ENCODE measurements at regions of chr1 and their contacts with region 1.

Region 1: GRCh38 chr1:150629115-150629928 is at the start of gene ENSA:
- DNase-seq: peak; percentile 99
- ATAC-seq: peak; percentile 95
- H3K4me3 ChIP-seq: peak within 1 kb of the TSS; percentile 81
- H3K27ac ChIP-seq: peak within 1 kb of the TSS; percentile 97
- H3K4me1 ChIP-seq: peaks cover 5% of the 10 kb centered on the region; the same call in 1 of the 2 replicates
- H3K27me3 ChIP-seq: no peaks in the 10 kb centered on the region
- CTCF ChIP-seq: no peak
- EP300 ChIP-seq: no peak
- POLR2A ChIP-seq: peak; percentile 92
- RAD21 ChIP-seq: no peak
- polyA plus RNA-seq, gene ENSA: 56.1 to 86.8 TPM

Region 2: GRCh38 chr1:150486964-150487762 is 142.2 kb before region 1 on chr1 and contains the start of gene TARS2:
- CTCF ChIA-PET with region 1: no interaction called
- POLR2A ChIA-PET with region 1: no interaction called
- RAD21 ChIA-PET with region 1: no interaction called
- SMC1A ChIA-PET with region 1: no interaction called
- in situ Hi-C with region 1: no loop called
- intact Hi-C with region 1: loop called (anchors 10 kb)
- DNase-seq: peak; percentile 99
- ATAC-seq: peak; percentile 100
- H3K4me3 ChIP-seq: peak within 1 kb of the TSS; percentile 95
- H3K27ac ChIP-seq: peak within 1 kb of the TSS; percentile 86
- H3K4me1 ChIP-seq: no peaks in the 10 kb centered on the region
- H3K27me3 ChIP-seq: no peaks in the 10 kb centered on the region
- CTCF ChIP-seq: no peak
- EP300 ChIP-seq: peak in 1 of 2 experiments; percentile 38; a peak in 1 of 4 replicates
- POLR2A ChIP-seq: peak; percentile 96
- RAD21 ChIP-seq: no peak
- polyA plus RNA-seq, gene TARS2: 11.0 to 14.6 TPM

Region 3: DNA sequence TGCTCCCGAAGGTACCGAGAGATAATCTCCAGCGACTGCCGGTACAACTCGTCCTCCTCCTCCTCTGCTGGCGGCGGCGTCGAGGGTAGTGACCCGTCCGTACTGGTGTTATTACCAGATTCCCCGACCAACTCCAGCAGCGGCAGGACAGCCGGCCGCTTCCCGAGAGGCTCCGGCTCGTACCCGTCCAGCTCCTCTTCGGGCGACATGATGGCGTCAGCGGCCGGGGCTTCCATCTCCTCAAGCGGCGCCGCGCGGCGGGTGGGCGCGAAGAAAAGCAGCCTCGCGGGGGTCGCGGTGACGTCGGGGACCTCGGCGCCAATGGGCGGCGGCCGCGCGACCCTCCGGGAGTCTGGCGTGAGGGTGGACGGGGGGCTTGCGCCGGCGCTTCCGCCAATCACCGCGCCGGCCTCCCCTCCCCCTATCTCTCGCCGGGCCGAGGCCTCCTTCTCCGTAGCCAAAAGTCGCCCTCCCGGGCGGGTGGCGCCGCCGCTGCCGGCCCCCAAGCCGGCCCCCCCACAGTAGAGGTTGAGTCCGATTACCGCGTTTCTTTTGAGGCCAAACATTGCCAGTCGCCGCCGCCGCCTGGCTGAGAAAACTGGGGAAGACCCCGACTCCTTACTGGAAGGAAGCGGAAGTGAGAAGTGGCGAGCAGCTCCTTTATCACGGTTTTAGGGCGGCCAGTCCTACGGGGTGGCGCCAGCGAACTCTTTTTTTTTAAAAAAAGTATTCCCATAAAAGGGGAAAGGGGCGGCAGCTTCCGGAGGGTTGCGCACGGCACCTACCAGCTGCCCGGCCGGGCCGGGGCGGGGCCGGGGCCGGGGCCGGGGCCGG is 50.1 kb before region 1 on chr1 and contains the start of gene MCL1:
- CTCF ChIA-PET with region 1: interaction called, 6 read pairs
- POLR2A ChIA-PET with region 1: interaction called, 24 read pairs
- RAD21 ChIA-PET with region 1: interaction called, 14 read pairs
- SMC1A ChIA-PET with region 1: interaction called, 12 read pairs
- in situ Hi-C with region 1: no loop called
- intact Hi-C with region 1: loop called (anchors 1 kb)
- DNase-seq: peak; percentile 69
- ATAC-seq: peak; percentile 90
- H3K4me3 ChIP-seq: peak within 1 kb of the TSS; percentile 85
- H3K27ac ChIP-seq: peak within 1 kb of the TSS; percentile 96
- H3K4me1 ChIP-seq: peaks cover 3% of the 10 kb centered on the region; the same call in 1 of the 2 replicates
- H3K27me3 ChIP-seq: no peaks in the 10 kb centered on the region
- CTCF ChIP-seq: no peak
- EP300 ChIP-seq: peak in 1 of 2 experiments; percentile 47; a peak in 1 of 4 replicates
- POLR2A ChIP-seq: peak; percentile 94
- RAD21 ChIP-seq: 0 out of 2 replicates have a peak, but pooled peaks have one; percentile 15
- polyA plus RNA-seq, gene MCL1: 18.1 to 25.5 TPM

Region 4: GRCh38 chr1:150696590-150697524 is 67.5 kb after region 1 on chr1 and contains the start of gene GOLPH3L:
- CTCF ChIA-PET with region 1: interaction called, 6 read pairs
- POLR2A ChIA-PET with region 1: interaction called, 16 read pairs
- RAD21 ChIA-PET with region 1: interaction called, 4 read pairs
- SMC1A ChIA-PET with region 1: interaction called, 8 read pairs
- in situ Hi-C with region 1: no loop called
- intact Hi-C with region 1: no loop called
- DNase-seq: peak; percentile 99
- ATAC-seq: peak; percentile 100
- H3K4me3 ChIP-seq: peak within 1 kb of the TSS; percentile 72
- H3K27ac ChIP-seq: peak within 1 kb of the TSS; percentile 45
- H3K4me1 ChIP-seq: peaks cover 3% of the 10 kb centered on the region; the same call in 1 of the 2 replicates
- H3K27me3 ChIP-seq: no peaks in the 10 kb centered on the region
- CTCF ChIP-seq: no peak
- EP300 ChIP-seq: no peak
- POLR2A ChIP-seq: peak; percentile 36; the same call in 1 of the 2 replicates
- RAD21 ChIP-seq: no peak
- polyA plus RNA-seq, gene GOLPH3L: 11.8 to 12.1 TPM

Region 5: GRCh38 chr1:150925816-150926741 is 296.8 kb after region 1 on chr1 and contains the start of gene SETDB1:
- CTCF ChIA-PET with region 1: interaction called, 3 read pairs
- POLR2A ChIA-PET with region 1: no interaction called
- RAD21 ChIA-PET with region 1: interaction called, 3 read pairs
- SMC1A ChIA-PET with region 1: interaction called, 7 read pairs
- in situ Hi-C with region 1: no loop called
- intact Hi-C with region 1: loop called (anchors 10 kb)
- DNase-seq: peak; percentile 92
- ATAC-seq: peak; percentile 93
- H3K4me3 ChIP-seq: peak within 1 kb of the TSS; percentile 98
- H3K27ac ChIP-seq: peak within 1 kb of the TSS; percentile 98
- H3K4me1 ChIP-seq: peaks cover 12% of the 10 kb centered on the region
- H3K27me3 ChIP-seq: no peaks in the 10 kb centered on the region
- CTCF ChIP-seq: peak in 1 of 3 experiments; percentile 22; a peak in 1 of 6 replicates
- EP300 ChIP-seq: peak; percentile 26 to 38; a peak in 1 of 4 replicates
- POLR2A ChIP-seq: peak; percentile 71
- RAD21 ChIP-seq: no peak
- polyA plus RNA-seq, gene SETDB1: 14.5 to 14.7 TPM